ENCODE measurements at regions of chr20 and their contacts with region 1.

Region 1: GRCh38 chr20:37990571-37991151 is 42.6 kb downstream of the TTI1 start:
- DNase-seq: peak; percentile 84
- ATAC-seq: peak; percentile 92
- H3K4me3 Mint-ChIP-seq: peak overlapping the region; percentile 23
- H3K27ac Mint-ChIP-seq: peak overlapping the region; percentile 58
- H3K4me1 Mint-ChIP-seq: peaks cover 21% of the 10 kb centered on the region
- H3K27me3 Mint-ChIP-seq: no peaks in the 10 kb centered on the region

Region 2: GRCh38 chr20:37564388-37565133 is 426.1 kb before region 1 on chr20:
- CTCF ChIA-PET with region 1: interaction called, 3 read pairs
- POLR2A ChIA-PET with region 1: interaction called, 3 read pairs
- intact Hi-C with region 1: loop called (anchors 1 to 2 kb)
- DNase-seq: peak; percentile 68
- ATAC-seq: peak; percentile 57
- H3K4me3 Mint-ChIP-seq: no peak overlapping the region
- H3K27ac Mint-ChIP-seq: no peak overlapping the region
- H3K4me1 Mint-ChIP-seq: no peaks in the 10 kb centered on the region
- H3K27me3 Mint-ChIP-seq: peaks cover 34% of the 10 kb centered on the region

Region 3: DNA sequence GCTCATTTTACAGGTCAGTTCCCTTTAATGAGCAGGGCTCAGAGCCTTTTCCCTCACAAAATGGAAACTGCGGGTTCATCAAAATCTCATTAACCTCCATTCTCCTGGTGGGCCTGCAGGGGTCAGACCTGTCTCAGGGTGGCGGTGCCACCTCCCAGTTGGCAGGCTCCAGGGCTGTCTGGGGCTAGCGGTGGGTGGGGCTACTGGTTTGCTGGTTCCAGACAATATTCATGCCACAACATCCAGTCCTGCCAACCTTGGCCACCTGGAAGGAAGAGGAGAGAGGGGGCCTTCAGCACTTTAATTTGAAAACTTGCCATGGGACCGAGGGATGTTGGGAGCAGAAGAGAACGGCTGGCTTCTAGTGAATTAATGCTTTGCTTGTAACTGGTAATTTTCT is 338.7 kb before region 1 on chr20:
- CTCF ChIA-PET with region 1: interaction called, 5 read pairs
- POLR2A ChIA-PET with region 1: no interaction called
- intact Hi-C with region 1: loop called in 1 of 2 experiments (anchors 1 kb)
- DNase-seq: peak; percentile 70
- ATAC-seq: peak; percentile 94
- H3K4me3 Mint-ChIP-seq: no peak overlapping the region
- H3K27ac Mint-ChIP-seq: no peak overlapping the region
- H3K4me1 Mint-ChIP-seq: no peaks in the 10 kb centered on the region
- H3K27me3 Mint-ChIP-seq: peaks cover 9% of the 10 kb centered on the region

Region 4: DNA sequence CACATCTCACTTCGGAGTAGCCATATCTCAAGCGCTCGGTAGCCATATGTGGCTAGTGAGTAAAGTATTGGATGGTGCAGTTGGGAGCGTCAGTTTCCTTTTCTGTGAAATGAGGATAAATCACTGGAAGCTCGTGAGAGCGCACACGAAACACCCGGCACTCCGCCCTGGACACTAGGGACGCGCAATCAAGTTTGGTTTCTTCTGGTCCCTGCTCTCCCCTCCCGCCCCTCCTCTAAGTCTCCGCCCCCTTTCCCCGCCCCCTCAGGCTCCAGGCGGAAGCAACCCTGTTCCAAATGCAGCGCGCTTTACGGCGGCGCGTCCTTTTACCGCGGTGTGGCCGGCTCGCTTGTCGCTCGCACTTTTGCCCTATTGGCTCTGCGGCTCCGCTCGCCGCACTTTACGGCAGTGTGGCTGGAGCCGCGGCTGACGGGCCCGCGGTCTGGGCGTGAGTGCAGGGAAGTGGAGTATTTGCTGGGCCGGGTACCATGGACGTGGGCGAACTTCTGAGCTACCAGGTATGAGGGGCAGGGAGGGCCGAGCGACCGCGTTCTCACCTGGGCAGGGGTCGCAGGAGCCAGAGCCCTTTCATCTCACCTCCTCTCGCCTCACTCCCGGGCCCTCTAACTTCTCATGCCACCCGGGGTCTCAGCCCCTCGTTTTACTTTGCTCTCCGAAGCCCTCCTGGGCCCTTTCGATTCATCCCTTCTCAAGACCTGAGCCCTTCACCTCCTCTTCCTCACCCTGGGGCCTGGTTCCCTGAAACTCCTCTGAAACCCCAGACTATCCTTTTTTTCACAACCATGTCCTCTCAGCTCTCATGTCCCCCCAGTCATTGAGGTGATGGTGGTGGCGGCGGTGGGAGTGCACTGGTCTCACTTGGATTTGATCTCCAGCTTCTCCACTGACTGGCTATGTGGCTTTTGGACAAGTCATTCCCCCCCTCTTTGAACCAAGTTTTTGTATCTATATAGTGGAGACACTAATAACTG is 296.7 kb before region 1 on chr20 and contains the start of gene CTNNBL1:
- CTCF ChIA-PET with region 1: no interaction called
- POLR2A ChIA-PET with region 1: no interaction called
- intact Hi-C with region 1: loop called in 1 of 2 experiments (anchors 5 kb)
- DNase-seq: peak; percentile 99
- ATAC-seq: peak; percentile 98
- H3K4me3 Mint-ChIP-seq: peak within 1 kb of the TSS; percentile 100
- H3K27ac Mint-ChIP-seq: peak within 1 kb of the TSS; percentile 96
- H3K4me1 Mint-ChIP-seq: peaks cover 31% of the 10 kb centered on the region
- H3K27me3 Mint-ChIP-seq: peaks cover 14% of the 10 kb centered on the region
- total RNA-seq, gene CTNNBL1: 72.6 to 93.4 TPM

Region 5: DNA sequence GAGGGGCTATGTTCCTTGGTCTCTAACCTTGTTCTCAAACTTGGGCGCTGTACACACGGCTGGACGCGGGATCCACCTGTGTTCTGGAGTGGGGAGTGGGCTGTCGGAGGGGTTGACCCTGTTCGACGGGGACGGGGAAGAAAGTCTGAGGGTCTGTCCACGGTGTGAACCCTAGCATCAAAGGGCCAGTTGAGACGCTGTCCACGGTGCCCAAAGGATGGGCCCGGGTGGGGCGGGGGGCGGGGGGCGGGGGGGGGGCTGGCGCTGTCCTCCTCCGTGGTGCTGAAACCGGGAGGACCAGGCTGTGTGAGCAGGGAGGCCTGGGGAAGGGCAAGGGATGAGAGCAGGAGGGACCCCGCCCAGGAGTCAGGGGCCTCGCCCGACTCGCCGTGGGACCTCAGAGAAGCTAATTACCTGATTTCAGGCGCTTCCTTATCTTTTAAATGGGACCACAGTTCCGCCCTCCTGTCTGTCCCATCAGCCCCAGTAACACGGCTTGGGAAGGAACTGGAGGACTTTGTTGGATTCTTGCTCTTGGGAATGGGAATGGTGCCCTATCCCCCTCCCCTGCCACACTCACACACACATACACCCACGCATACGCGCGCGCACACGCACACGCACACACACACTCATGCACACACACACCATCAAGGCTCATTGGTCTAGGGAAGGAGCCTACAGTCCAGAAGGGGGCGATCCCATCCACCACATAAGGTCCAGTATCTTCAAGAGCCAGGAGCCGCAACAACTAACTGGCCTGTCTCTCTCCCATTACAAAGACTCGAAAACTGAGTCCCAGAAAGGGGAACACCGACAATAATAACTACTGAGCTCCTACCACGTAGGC is 88.8 kb before region 1 on chr20:
- CTCF ChIA-PET with region 1: interaction called, 3 read pairs
- POLR2A ChIA-PET with region 1: no interaction called
- intact Hi-C with region 1: loop called (anchors 2 to 5 kb)
- DNase-seq: peak; percentile 56
- ATAC-seq: no peak
- H3K4me3 Mint-ChIP-seq: peak overlapping the region; percentile 29
- H3K27ac Mint-ChIP-seq: no peak overlapping the region
- H3K4me1 Mint-ChIP-seq: peaks cover 14% of the 10 kb centered on the region
- H3K27me3 Mint-ChIP-seq: peaks cover 49% of the 10 kb centered on the region

Region 6: GRCh38 chr20:37922016-37922415 is 68.6 kb before region 1 on chr20:
- CTCF ChIA-PET with region 1: no interaction called
- POLR2A ChIA-PET with region 1: no interaction called
- intact Hi-C with region 1: loop called in 1 of 2 experiments (anchors 1 kb)
- DNase-seq: peak; percentile 78
- ATAC-seq: peak; percentile 88
- H3K4me3 Mint-ChIP-seq: no peak overlapping the region
- H3K27ac Mint-ChIP-seq: peak overlapping the region; percentile 40
- H3K4me1 Mint-ChIP-seq: peaks cover 16% of the 10 kb centered on the region
- H3K27me3 Mint-ChIP-seq: peaks cover 8% of the 10 kb centered on the region

Region 7: DNA sequence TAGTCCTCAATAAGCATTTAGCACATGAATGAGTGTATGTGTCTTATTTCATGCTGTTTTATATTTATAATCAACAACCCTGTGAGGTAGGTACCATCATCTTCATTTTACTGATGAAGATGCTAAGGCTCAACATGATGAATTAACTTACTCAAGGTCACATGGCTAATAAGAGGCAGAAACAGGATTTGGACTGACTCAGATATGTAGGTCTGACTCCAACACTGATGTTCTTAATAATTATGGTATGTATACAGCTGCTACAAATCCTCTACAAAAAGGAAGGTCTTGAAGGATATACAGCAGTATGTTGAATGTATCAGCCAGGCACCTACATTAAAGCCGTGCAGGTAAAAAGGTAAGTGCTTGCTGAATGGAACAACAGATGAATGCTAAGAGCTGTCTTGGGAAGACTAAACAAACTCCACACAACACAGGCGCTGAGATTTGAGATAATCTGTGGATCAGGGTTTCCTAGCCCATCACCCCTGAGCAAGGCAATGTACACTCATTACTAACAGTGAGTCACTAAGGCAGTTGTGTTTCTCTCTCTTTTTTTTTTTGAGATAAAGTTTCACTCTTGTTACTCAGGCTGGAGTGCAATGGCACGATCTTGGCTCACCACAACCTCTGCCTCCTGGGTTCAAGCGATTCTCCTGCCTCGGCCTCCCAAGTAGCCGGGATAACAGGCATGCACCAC is 10.7 kb after region 1 on chr20:
- CTCF ChIA-PET with region 1: interaction called, 8 read pairs
- POLR2A ChIA-PET with region 1: no interaction called
- intact Hi-C with region 1: loop called in 1 of 2 experiments (anchors 1 kb)
- DNase-seq: peak; percentile 46
- ATAC-seq: peak; percentile 87
- H3K4me3 Mint-ChIP-seq: no peak overlapping the region
- H3K27ac Mint-ChIP-seq: peak overlapping the region; percentile 41
- H3K4me1 Mint-ChIP-seq: peaks cover 43% of the 10 kb centered on the region
- H3K27me3 Mint-ChIP-seq: no peaks in the 10 kb centered on the region

Measured in activated CD4-positive, alpha-beta T cell treated with anti-CD3 and anti-CD28 coated beads for 36 hours (primary cell).